A549 (cell line): ENCODE measurements at regions of chr12 and their contacts with region 1.

Region 1: DNA sequence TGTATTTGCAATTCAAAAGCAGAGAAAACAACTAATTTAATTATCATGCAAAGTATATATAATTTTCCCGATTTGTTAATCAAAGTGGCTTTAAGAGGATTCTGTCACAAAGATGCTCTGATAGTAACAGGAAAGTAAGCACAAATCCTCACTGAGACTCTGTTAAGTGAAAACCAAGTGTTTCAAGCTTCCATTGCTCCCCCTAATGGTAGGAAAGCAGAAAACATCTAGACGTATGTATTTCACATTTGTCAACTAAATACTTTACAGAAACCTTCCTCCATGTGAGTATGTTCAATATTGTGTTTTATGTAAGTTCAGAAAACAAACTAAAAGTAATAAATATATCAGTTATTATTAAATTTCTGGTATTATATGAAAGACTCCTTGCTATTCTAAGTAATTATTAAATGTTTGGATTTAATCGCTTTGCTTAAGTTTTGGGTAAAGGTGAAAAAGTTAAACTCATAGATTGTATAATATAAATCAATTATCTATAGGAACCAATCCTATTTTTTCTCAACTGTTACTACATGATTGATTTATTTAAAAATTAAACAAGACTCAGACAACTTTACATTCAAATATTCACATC is 1.5 kb upstream of the NTS start:
- DNase-seq: peak; percentile 9 to 78
- ATAC-seq: peak; percentile 66 to 83; a peak in 4 of 6 replicates
- H3K4me3 ChIP-seq: no peak overlapping the region
- H3K27ac ChIP-seq: no peak overlapping the region
- H3K4me1 ChIP-seq: no peaks in the 10 kb centered on the region
- CTCF ChIP-seq: peak; percentile 77
- EP300 ChIP-seq: no peak
- POLR2A ChIP-seq: no peak
- RAD21 ChIP-seq: peak; percentile 73 to 77

Region 2: GRCh38 chr12:85575120-85576096 is 297.2 kb before region 1 on chr12:
- CTCF ChIA-PET with region 1: interaction called, 85 read pairs
- POLR2A ChIA-PET with region 1: no interaction called
- DNase-seq: peak; percentile 51 to 75
- ATAC-seq: peak; percentile 96 to 100
- H3K4me3 ChIP-seq: no peak overlapping the region
- H3K27ac ChIP-seq: peak overlapping the region in 1 of 2 experiments; percentile 19; a peak in 1 of 6 replicates
- H3K4me1 ChIP-seq: no peaks in the 10 kb centered on the region
- CTCF ChIP-seq: peak; percentile 74
- EP300 ChIP-seq: no peak
- POLR2A ChIP-seq: no peak
- RAD21 ChIP-seq: peak; percentile 76 to 82